Activated CD8-positive, alpha-beta memory T cell treated with anti-CD3 and anti-CD28 coated beads, Interleukin-2, amount 10 ng/mL, durations not matched to agents 7 days and 5 days (primary cell): ENCODE measurements at regions of chr2 and their contacts with region 1.

Region 1: DNA sequence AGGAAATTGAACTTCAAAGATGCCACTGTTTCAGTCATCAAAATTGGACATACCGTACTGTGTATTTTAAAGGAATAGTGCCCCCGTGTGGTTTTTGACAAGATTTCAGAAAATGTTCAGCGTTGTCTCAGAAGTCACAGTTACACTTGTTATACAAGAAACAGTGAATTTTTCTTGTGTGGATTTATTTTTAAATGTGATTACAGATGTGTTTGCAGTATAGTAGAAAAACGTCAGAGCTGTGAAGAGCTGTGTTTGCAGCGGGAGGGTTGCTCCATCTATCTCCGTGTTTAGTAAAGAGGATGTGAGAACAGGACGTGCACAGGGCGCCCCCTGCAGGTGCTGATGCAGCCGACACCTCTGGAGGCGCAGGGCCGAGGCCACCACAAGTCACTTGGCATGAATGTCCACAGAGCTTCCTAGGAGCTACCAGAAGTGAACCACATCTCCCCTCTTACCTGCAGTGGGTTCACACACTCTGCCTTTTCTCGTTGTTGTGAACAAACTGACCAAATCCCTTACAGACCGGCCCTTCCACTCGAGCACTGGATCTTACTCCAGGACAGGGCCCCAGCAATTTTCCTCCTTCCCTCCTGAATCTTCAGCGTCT is 73.1 kb downstream of the CACNB4 start:
- DNase-seq: peak; percentile 86
- ATAC-seq: peak; percentile 98
- H3K4me3 Mint-ChIP-seq: peak overlapping the region; percentile 72
- H3K27ac Mint-ChIP-seq: peak overlapping the region; percentile 69
- H3K4me1 Mint-ChIP-seq: peaks cover 5% of the 10 kb centered on the region
- H3K27me3 Mint-ChIP-seq: peaks cover 19% of the 10 kb centered on the region

Region 2: GRCh38 chr2:151999053-151999452 is 26.7 kb before region 1 on chr2:
- CTCF ChIA-PET with region 1: interaction called, 25 read pairs
- DNase-seq: peak; percentile 62
- ATAC-seq: peak; percentile 82
- H3K4me3 Mint-ChIP-seq: no peak overlapping the region
- H3K27ac Mint-ChIP-seq: no peak overlapping the region
- H3K4me1 Mint-ChIP-seq: peaks cover under 1% of the 10 kb centered on the region
- H3K27me3 Mint-ChIP-seq: peaks cover 2% of the 10 kb centered on the region

Region 3: DNA sequence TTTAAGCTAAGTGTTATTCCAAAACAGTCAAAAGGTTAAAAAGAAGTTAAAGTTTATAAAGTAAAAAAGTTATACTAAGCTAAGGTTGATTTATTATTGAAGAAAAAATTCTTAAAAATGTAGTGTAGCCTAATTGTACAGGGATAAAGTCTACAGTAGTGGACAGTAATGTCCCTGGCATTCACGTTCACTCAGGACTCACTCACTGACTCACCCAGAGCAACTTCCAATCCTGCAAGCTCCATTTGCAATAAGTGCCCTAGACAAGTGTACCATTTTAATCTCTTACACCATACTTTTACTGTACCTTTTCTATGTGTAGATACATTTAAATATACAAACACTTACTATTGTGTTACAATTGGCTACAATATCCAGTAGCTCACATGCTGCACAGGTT is 13.1 kb before region 1 on chr2:
- CTCF ChIA-PET with region 1: interaction called, 36 read pairs
- DNase-seq: no peak
- ATAC-seq: no peak
- H3K4me3 Mint-ChIP-seq: no peak overlapping the region
- H3K27ac Mint-ChIP-seq: no peak overlapping the region
- H3K4me1 Mint-ChIP-seq: no peaks in the 10 kb centered on the region
- H3K27me3 Mint-ChIP-seq: peaks cover 12% of the 10 kb centered on the region

Region 4: DNA sequence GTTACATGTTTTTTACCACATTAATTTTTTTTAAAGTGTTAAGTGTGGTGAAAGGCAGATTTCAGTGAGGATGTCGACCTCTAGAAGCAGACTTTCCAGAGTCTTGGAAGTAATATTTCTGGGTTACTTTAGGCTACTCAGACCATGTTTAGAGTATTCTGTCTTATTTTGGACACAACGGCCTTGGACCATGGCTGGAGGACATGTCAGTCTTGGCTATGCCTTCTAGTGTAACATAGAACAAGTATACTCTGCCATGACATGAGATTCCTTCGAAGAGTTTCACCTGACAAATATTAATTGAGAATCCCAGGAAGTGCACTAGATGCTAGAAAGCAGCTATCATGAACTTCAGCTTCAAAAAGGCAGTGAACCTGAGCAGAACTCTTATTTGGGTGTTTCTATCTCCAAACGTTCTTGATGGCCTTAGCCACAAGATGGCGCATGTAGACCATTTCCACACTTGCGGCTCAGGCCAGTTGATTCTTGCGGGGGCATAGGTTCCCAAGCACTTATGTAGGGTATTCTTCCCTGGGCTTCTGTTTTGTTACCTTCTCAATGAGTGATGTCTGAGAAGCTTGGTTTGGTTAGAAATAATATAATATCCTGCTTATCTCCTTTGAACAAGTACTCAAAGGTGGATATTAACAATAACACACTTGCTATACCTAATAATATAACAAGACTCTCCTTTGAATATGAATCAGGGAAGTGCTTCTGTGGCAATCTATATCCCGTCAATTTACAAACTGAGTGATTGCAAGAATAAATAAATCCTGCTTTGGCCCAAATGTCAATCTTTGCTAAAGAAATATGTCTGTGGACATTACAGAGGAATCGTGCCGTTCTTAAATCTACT is 11.1 kb after region 1 on chr2:
- CTCF ChIA-PET with region 1: interaction called, 16 read pairs
- DNase-seq: peak; percentile 72
- ATAC-seq: peak; percentile 67
- H3K4me3 Mint-ChIP-seq: no peak overlapping the region
- H3K27ac Mint-ChIP-seq: no peak overlapping the region
- H3K4me1 Mint-ChIP-seq: no peaks in the 10 kb centered on the region
- H3K27me3 Mint-ChIP-seq: no peaks in the 10 kb centered on the region